Activated CD4-positive, alpha-beta memory T cell treated with anti-CD3 and anti-CD28 coated beads, Interleukin-2, amount 10 ng/mL, durations not matched to agents 7 days and 5 days (primary cell): ENCODE measurements at regions of chr4 and their contacts with region 1.

Region 1: DNA sequence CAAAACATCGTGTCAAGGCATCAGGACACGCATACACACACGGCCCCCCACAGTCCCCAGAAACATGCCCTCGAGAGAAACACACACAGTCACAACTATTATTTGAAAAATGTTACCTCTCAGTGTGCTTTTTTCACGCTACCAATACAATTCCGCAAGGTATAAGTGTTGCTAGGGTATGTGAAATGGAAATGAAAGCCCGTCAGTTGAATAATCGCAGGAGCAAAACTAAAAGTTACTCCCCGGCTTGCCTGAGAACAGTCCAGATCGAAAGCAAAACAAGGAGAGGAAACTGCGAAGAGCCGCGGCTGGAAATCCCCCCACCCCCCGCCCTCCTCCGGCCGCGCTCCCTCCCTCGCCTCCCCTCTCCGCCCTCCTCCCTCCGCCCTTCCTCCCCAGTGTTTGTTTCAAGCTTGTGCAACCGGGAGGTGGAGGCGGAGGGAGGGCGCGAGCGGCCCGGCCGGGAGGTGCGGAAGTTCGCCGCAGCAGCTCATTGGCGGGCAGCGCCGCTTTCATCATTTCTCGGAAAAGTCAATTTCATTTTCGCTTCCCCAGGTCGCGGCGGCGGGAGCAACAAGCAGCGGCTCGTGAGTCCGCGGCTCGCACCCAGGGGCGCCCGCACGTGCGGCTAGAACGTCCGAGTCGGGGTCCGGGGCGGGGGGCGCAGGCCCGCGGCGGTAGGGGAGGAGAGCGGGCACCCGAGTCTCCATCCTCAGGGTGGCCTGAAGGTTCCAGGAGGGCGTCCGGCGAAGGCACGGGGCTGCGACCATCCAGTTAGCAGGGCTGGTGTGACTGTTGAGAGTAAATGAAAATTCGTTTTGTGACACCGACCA is at the start of gene IRF2:
- DNase-seq: peak; percentile 98
- H3K4me3 Mint-ChIP-seq: peak within 1 kb of the TSS; percentile 91
- H3K27ac Mint-ChIP-seq: peak within 1 kb of the TSS; percentile 96
- H3K4me1 Mint-ChIP-seq: peaks cover 59% of the 10 kb centered on the region
- H3K27me3 Mint-ChIP-seq: no peaks in the 10 kb centered on the region
- total RNA-seq, gene IRF2: 77.2 to 78.5 TPM

Region 2: DNA sequence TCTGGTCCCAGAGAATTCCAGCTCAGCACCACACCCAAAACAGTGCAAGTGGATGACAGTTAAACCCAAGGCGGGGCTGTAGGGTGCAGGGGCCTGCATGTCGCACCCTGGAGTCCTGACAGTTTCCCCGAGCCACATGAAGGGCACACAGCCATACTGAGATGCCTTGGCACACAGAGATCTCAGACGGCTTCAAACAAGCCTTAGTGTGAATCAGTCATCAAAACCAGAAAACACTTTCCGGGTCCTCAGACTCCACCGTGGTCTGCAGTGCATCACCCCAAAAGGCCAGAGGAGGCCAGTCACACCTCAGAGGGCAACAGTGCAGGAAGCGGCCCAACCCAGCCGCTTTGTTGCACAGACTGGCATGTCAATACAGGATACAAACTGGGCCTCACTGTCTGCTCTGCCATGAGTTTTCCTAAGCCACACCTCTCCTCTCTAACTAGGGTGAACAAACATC is 192.2 kb before region 1 on chr4:
- CTCF ChIA-PET with region 1: no interaction called
- POLR2A ChIA-PET with region 1: interaction called, 14 read pairs
- DNase-seq: peak; percentile 70
- H3K4me3 Mint-ChIP-seq: no peak overlapping the region
- H3K27ac Mint-ChIP-seq: peak overlapping the region; percentile 84
- H3K4me1 Mint-ChIP-seq: peaks cover 53% of the 10 kb centered on the region
- H3K27me3 Mint-ChIP-seq: no peaks in the 10 kb centered on the region

Region 3: GRCh38 chr4:184329659-184330400 is 144.6 kb before region 1 on chr4:
- CTCF ChIA-PET with region 1: no interaction called
- POLR2A ChIA-PET with region 1: no interaction called
- DNase-seq: no peak
- H3K4me3 Mint-ChIP-seq: no peak overlapping the region
- H3K27ac Mint-ChIP-seq: no peak overlapping the region
- H3K4me1 Mint-ChIP-seq: peaks cover 17% of the 10 kb centered on the region
- H3K27me3 Mint-ChIP-seq: no peaks in the 10 kb centered on the region

Region 4: DNA sequence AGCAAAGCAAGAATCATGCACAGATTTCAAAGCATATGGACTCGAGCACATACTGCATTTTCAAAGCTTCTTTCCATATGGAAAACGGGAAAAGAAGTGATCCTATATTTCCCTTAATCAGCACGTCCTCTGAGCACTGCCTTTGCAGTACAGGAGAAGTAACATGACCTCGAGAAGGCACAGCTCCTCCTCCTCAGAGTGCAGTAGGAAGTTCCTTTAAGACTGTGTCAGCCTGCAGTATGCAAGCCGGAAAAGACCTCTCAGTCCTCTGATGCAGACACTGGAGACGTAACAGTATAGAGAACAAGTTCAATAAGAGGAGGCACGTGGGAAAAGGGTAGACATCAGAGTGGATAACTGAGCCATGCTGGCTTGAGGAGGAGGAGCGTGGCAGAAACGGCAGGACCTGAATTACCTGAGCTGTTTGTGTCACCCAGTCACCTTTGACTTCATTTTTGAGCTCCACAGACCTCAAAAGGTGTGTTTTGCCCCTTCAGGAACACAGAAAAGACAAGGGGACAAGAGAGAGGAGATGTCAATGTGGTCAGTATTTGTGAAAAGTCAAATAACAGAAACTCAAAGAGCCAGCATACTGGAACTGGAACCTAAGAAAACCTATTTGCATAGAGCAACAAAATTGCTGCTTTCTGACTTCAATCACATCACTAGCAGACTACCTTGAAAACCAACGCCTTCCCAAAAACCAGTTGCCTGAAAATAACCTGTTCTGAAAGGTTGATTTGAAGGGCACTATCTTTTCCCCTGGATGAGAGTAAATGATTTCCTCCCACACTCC is 20.9 kb before region 1 on chr4:
- CTCF ChIA-PET with region 1: no interaction called
- POLR2A ChIA-PET with region 1: interaction called, 14 read pairs
- DNase-seq: peak; percentile 43
- H3K4me3 Mint-ChIP-seq: no peak overlapping the region
- H3K27ac Mint-ChIP-seq: peak overlapping the region; percentile 59
- H3K4me1 Mint-ChIP-seq: peaks cover 59% of the 10 kb centered on the region
- H3K27me3 Mint-ChIP-seq: no peaks in the 10 kb centered on the region

Region 5: GRCh38 chr4:184506527-184507121 is 32.1 kb after region 1 on chr4:
- CTCF ChIA-PET with region 1: interaction called, 4 read pairs
- POLR2A ChIA-PET with region 1: interaction called, 94 read pairs
- DNase-seq: peak; percentile 47
- H3K4me3 Mint-ChIP-seq: no peak overlapping the region
- H3K27ac Mint-ChIP-seq: peak overlapping the region; percentile 50
- H3K4me1 Mint-ChIP-seq: peaks cover 41% of the 10 kb centered on the region
- H3K27me3 Mint-ChIP-seq: no peaks in the 10 kb centered on the region

Region 6: GRCh38 chr4:184538023-184538599 is 63.6 kb after region 1 on chr4:
- CTCF ChIA-PET with region 1: interaction called, 25 read pairs
- POLR2A ChIA-PET with region 1: interaction called, 193 read pairs
- DNase-seq: peak; percentile 72
- H3K4me3 Mint-ChIP-seq: peak overlapping the region; percentile 85
- H3K27ac Mint-ChIP-seq: peak overlapping the region; percentile 88
- H3K4me1 Mint-ChIP-seq: peaks cover 49% of the 10 kb centered on the region
- H3K27me3 Mint-ChIP-seq: no peaks in the 10 kb centered on the region